Psoas muscle (tissue), 8 donors: ENCODE measurements at regions of chr10 and their contacts with region 1.

Region 1: DNA sequence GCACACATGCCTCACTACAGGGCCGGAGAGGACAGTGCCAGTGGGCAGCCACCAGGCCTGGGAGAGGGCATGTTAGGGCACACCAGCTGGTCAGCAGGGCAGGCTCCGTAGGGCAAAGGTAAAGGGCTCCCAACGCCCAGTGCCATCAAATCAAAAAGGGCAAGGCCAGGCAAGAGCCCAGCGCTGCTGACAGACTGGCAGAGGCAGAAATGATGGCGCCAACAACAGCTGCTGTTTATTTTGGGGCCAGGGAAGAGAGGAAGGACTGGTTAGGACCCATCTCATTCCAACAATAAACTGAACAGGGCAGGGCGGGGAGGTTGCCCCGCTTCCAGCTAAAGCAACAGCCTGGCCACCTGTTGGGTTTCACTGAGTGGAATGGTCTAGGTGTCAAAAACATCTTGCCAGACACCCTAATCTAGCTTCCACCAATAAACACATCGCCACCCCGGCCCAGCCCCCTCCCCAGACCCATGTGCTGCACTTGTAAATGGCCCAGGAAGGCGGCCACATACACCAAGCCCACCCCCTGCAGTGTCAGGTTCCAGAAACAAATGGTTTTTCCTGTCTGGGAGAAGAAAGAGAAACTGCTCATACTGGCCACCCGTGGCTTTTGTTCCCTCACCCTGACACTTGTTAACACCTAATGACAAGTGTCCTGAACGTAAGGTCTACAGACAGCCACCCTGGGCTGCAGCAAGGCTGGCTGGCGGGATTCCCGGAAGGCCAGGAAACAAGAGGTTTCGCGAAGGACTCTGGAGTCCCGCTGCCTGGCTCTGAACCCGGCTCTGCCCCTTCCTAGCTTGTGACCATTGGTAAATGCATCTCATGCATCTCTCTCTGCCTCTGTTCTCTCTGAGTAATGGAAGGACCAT is 15.3 kb downstream of the SH3PXD2A start:
- DNase-seq: peak; percentile 56 to 83
- ATAC-seq: peak; percentile 60 to 73 (median 72)
- H3K4me3 ChIP-seq: peak overlapping the region; percentile 15
- H3K27ac ChIP-seq: peak overlapping the region; percentile 83
- H3K4me1 ChIP-seq: peaks cover 78% of the 10 kb centered on the region
- H3K27me3 ChIP-seq: no peaks in the 10 kb centered on the region
- CTCF ChIP-seq: no peak

Region 2: GRCh38 chr10:103759100-103759781 is 80.9 kb before region 1 on chr10:
- intact Hi-C with region 1: loop called in 1 of 2 experiments (anchors 5 kb)
- DNase-seq: peak; percentile 45 to 75
- ATAC-seq: peak; percentile 86 to 90 (median 87)
- H3K4me3 ChIP-seq: no peak overlapping the region
- H3K27ac ChIP-seq: peak overlapping the region; percentile 99
- H3K4me1 ChIP-seq: peaks cover 80% of the 10 kb centered on the region
- H3K27me3 ChIP-seq: no peaks in the 10 kb centered on the region
- CTCF ChIP-seq: no peak

Region 3: DNA sequence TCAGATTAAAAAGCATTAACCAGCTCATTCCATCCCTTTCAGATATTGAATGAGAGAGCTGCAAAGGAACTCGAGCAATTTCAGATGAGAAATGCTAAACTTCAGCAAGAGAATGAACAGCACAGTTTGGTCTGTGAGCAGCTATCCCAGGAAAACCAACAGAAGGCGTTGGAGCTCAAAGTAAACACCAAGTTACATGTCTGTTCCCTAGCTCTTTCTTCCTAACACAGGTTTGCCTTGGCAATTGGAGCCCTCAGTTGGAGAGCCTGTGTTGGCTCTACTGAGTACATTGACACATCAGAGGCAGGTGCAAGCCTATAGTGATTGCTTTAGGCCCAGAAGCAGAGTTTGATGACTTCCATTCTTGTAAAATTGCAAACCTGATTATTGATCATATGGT is 528.3 kb after region 1 on chr10:
- intact Hi-C with region 1: no loop called
- DNase-seq: no peak
- ATAC-seq: no peak
- H3K4me3 ChIP-seq: no peak overlapping the region
- H3K27ac ChIP-seq: no peak overlapping the region
- H3K4me1 ChIP-seq: no peaks in the 10 kb centered on the region
- H3K27me3 ChIP-seq: no peaks in the 10 kb centered on the region
- CTCF ChIP-seq: no peak